Pancreas (tissue), 10 donors: ENCODE measurements at regions of chr16 and their contacts with region 1.

Region 1: DNA sequence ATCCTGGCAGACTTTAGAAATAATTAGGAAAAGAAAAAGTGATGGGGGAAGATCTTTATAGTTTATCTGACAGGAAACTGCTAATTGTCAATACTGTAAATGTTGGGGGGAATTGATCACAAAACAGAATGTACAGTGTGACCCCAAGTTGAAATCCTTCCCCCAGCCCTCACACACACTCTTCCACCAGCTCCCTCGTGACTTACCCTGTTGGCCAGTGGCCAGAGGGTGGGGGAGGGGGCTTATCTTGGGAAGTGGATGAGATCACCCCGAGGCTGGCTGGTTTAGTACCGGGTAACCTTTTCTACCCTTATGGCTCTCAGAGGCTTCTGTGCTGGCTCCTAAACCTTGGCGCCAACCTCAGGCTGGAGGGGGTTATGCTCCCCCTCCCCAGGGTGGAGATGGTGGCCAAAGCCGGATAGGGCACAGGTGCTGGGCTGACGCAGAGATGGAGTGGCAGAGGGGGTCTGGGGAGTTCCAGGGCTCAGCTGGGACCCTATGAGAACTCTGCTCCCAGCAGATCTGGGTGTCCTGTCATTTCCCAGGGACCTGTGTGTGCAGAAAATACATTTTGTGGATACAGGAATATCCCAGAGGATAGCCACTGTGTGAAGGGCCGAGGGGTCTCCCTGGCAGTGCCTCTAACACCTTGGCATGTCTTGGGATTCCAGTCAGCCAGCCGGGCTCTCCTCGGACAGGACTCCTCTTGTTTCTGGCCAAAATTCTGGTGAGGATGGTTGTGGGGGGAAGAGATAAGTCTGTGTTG is 18.6 kb downstream of the CDH16 start:
- DNase-seq: peak; percentile 64 to 94 (median 88)
- ATAC-seq: peak; percentile 76 to 87 (median 83)
- H3K4me3 ChIP-seq: no peak overlapping the region
- H3K27ac ChIP-seq: peak overlapping the region in 2 of 4 donors; percentile 27 to 39
- H3K4me1 ChIP-seq: peaks cover 0 to 15% (median 14%) of the 10 kb centered on the region in 3 donors
- H3K27me3 ChIP-seq: no peaks in the 10 kb centered on the region
- CTCF ChIP-seq: no peak

Region 2: DNA sequence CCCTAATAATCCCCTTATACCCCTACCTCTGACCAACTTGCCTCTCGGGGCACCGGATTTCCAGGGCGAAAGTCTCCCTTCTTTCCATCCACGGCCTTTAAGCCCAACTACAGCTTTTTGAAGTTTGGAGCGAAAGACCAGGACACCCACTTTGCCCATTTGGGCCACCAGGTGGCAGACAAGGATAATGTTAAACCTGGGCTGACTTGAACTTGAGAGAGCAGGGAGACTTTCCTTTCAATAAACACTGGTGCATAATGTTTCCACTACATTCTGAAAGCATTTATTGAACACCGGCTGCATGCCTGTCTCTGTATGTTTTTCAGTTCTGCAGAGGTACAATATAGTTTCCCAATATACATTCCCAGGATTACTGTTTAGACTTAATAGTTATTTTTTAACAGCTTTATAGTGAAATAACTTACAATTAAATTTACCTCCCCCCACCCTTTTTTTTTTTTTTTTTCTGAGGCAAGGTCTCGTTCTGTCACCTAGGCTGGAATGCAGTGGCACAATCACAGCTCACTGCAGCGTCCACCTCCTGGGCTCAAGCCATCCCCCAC is 54.0 kb after region 1 on chr16:
- intact Hi-C with region 1: loop called in 1 of 3 experiments (anchors 10 kb)
- DNase-seq: peak; percentile 58 to 86 (median 72)
- ATAC-seq: peak; percentile 75 to 98 (median 94)
- H3K4me3 ChIP-seq: no peak overlapping the region
- H3K27ac ChIP-seq: no peak overlapping the region
- H3K4me1 ChIP-seq: no peaks in the 10 kb centered on the region
- H3K27me3 ChIP-seq: no peaks in the 10 kb centered on the region
- CTCF ChIP-seq: peak; percentile 56 to 75 (median 62)